B cell (primary cell): ENCODE measurements at regions of chr12 and their contacts with region 1.

Region 1: DNA sequence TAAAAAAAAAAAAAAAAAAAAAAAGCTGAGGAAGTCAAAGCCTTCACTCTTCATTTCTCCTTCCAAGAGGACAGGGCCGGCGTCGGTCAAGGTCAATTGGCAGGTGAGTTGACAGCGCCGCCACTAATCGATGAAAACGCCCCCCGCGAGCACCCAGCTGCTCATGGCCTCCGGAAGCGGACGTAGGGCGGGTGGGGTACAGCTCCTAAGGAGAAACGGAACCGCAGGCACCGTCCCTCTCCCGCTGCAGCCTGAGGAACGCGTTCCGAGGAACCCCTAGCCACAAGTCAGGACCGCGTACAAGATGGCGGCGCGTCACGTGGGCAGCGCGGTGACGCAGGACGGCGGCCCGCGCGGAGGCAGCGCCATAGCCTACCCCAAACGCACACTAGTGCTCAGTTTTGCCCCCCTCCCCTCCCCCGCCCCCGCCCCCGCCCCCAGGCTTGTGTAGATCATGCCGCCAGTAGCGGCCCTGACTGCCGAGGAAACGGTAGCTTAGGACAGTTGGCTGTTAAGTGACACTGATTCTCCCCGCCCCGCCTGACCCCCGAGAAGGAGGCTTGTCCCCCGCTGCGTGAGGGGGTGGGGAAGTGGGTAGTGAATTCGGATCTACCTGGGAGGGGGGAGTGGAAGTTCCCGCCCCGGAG is at the start of gene ATF1:
- DNase-seq: peak; percentile 95
- ATAC-seq: peak; percentile 80
- H3K4me3 ChIP-seq: peak within 1 kb of the TSS; percentile 92 to 98 (median 96)
- H3K4me3 Mint-ChIP-seq: peak within 1 kb of the TSS; percentile 91
- H3K27ac ChIP-seq: peak within 1 kb of the TSS; percentile 95
- H3K27ac Mint-ChIP-seq: peak within 1 kb of the TSS; percentile 99
- H3K4me1 ChIP-seq: peaks cover 10 to 33% of the 10 kb centered on the region in 2 donors
- H3K4me1 Mint-ChIP-seq: peaks cover 33% of the 10 kb centered on the region
- H3K27me3 ChIP-seq: no peaks in the 10 kb centered on the region
- H3K27me3 Mint-ChIP-seq: no peaks in the 10 kb centered on the region
- CTCF ChIP-seq: no peak
- total RNA-seq, gene ATF1: 39.5 and 45.4 TPM in 2 replicates

Region 2: GRCh38 chr12:50517456-50518048 is 246.2 kb before region 1 on chr12:
- CTCF ChIA-PET with region 1: interaction called, 3 read pairs
- POLR2A ChIA-PET with region 1: no interaction called
- intact Hi-C with region 1: loop called (anchors 2 kb)
- DNase-seq: peak; percentile 86
- ATAC-seq: peak; percentile 70
- H3K4me3 ChIP-seq: peak overlapping the region in 4 of 5 experiments; percentile 27 to 55 (median 38)
- H3K4me3 Mint-ChIP-seq: no peak overlapping the region
- H3K27ac ChIP-seq: peak overlapping the region; percentile 82 to 85
- H3K27ac Mint-ChIP-seq: no peak overlapping the region
- H3K4me1 ChIP-seq: peaks cover 86 to 97% of the 10 kb centered on the region in 2 donors
- H3K4me1 Mint-ChIP-seq: peaks cover 57% of the 10 kb centered on the region
- H3K27me3 ChIP-seq: no peaks in the 10 kb centered on the region
- H3K27me3 Mint-ChIP-seq: no peaks in the 10 kb centered on the region
- CTCF ChIP-seq: no peak

Region 3: GRCh38 chr12:50799908-50800307 is 36.1 kb after region 1 on chr12:
- CTCF ChIA-PET with region 1: no interaction called
- POLR2A ChIA-PET with region 1: no interaction called
- intact Hi-C with region 1: no loop called
- DNase-seq: no peak
- ATAC-seq: no peak
- H3K4me3 ChIP-seq: no peak overlapping the region
- H3K4me3 Mint-ChIP-seq: no peak overlapping the region
- H3K27ac ChIP-seq: no peak overlapping the region
- H3K27ac Mint-ChIP-seq: no peak overlapping the region
- H3K4me1 ChIP-seq: no peaks in the 10 kb centered on the region
- H3K4me1 Mint-ChIP-seq: no peaks in the 10 kb centered on the region
- H3K27me3 ChIP-seq: no peaks in the 10 kb centered on the region
- H3K27me3 Mint-ChIP-seq: no peaks in the 10 kb centered on the region
- CTCF ChIP-seq: no peak

Region 4: GRCh38 chr12:50924439-50925341 is 160.9 kb after region 1 on chr12:
- CTCF ChIA-PET with region 1: interaction called, 6 read pairs
- POLR2A ChIA-PET with region 1: no interaction called
- intact Hi-C with region 1: loop called (anchors 1 kb)
- DNase-seq: peak; percentile 83
- ATAC-seq: peak; percentile 94
- H3K4me3 ChIP-seq: peak overlapping the region; percentile 75 to 99 (median 88)
- H3K4me3 Mint-ChIP-seq: peak overlapping the region; percentile 96
- H3K27ac ChIP-seq: peak overlapping the region; percentile 81 to 91
- H3K27ac Mint-ChIP-seq: peak overlapping the region; percentile 98
- H3K4me1 ChIP-seq: peaks cover 43 to 44% of the 10 kb centered on the region in 2 donors
- H3K4me1 Mint-ChIP-seq: peaks cover 63% of the 10 kb centered on the region
- H3K27me3 ChIP-seq: no peaks in the 10 kb centered on the region
- H3K27me3 Mint-ChIP-seq: no peaks in the 10 kb centered on the region
- CTCF ChIP-seq: no peak

Region 5: DNA sequence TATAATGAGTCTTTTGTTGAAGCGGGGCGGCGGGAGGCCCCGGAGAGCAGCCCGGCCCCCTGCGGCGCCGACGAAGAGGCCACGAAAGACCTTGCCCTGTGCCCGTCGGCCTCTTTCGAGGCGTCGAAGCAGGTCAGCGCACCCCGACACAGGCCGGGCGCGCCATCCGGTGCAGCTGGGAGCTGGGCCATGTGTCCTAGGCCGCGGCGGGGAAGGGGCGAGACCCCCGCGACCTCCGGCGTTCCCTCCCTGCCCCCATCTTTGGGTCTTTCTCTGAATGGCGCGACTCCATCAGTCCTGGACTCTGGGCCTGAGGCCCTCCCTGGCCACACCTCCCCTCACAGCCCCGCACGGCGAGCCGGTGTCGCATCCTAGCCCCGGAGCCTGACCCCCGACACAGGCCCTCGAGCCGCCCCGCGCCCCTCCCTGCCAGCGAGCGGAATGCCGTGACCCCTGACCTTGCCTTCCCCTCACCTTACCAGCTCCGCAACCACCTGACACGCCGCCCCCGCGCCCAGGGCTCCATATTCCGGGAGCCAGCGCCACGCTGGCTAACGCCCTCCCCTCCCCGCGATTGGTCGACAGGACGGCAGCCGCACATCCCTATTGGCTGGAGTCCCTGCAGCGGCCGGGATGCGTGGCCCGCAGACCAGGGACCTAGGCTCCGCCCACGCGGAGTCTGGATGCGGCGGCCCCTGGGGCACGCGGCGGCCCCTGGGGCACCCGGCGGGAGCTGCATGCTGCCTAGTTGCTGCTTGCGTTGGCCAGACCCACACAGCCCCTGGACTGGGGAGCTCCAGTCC is 262.3 kb after region 1 on chr12 and contains the start of gene SLC11A2:
- CTCF ChIA-PET with region 1: interaction called, 11 read pairs
- POLR2A ChIA-PET with region 1: no interaction called
- intact Hi-C with region 1: loop called (anchors 1 kb)
- DNase-seq: peak; percentile 92
- ATAC-seq: peak; percentile 98
- H3K4me3 ChIP-seq: peak within 1 kb of the TSS; percentile 34 to 97 (median 78)
- H3K4me3 Mint-ChIP-seq: peak within 1 kb of the TSS; percentile 94
- H3K27ac ChIP-seq: peak within 1 kb of the TSS; percentile 71 to 74
- H3K27ac Mint-ChIP-seq: peak within 1 kb of the TSS; percentile 93
- H3K4me1 ChIP-seq: peaks cover 13 to 28% of the 10 kb centered on the region in 2 donors
- H3K4me1 Mint-ChIP-seq: peaks cover 36% of the 10 kb centered on the region
- H3K27me3 ChIP-seq: peaks cover 0 to 3% (median 0%) of the 10 kb centered on the region in 4 experiments
- H3K27me3 Mint-ChIP-seq: peaks cover 4% of the 10 kb centered on the region
- CTCF ChIP-seq: no peak
- total RNA-seq, gene SLC11A2: 42.0 and 45.7 TPM in 2 replicates

Region 6: DNA sequence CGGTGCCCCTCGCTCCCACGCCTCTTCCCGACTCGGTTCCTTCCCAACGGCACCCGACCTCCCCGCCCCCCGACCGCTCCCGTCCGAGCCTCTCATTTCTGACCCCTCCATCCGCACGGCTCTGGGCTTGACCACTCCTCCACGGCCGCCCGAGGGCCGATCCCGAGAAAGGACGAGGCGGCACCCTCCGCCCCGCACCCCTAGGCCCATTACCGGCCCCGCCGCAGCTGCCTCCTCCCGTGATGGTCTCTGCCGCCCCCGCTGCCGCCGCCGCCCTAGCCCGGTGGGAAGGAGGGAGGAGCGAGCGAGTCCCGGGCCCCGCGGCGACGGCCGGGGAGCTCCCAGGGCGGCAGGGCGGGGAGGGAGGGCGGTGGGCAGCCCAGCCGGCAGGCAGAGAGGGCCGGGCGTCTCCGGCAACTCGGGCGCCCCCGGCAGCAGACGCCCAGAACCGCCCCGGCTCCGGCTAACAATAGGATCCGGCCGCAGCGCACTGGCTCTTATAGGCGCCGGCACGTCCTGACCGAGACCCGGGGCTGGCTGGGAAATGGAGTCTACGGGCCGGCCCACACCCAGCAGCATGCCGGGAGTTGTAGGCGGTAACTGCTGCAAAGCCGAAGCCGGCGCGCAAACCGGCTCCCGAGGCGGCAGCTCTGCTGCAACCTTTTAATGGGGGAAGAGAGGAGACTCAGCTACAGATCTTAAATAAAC is 319.5 kb after region 1 on chr12 and contains the start of gene CSRNP2:
- CTCF ChIA-PET with region 1: interaction called, 6 read pairs
- POLR2A ChIA-PET with region 1: no interaction called
- intact Hi-C with region 1: loop called (anchors 1 kb)
- DNase-seq: peak; percentile 96
- ATAC-seq: peak; percentile 99
- H3K4me3 ChIP-seq: peak within 1 kb of the TSS; percentile 54 to 87 (median 77)
- H3K4me3 Mint-ChIP-seq: peak within 1 kb of the TSS; percentile 96
- H3K27ac ChIP-seq: peak within 1 kb of the TSS; percentile 11 to 88
- H3K27ac Mint-ChIP-seq: peak within 1 kb of the TSS; percentile 88
- H3K4me1 ChIP-seq: peaks cover 9 to 17% of the 10 kb centered on the region in 2 donors
- H3K4me1 Mint-ChIP-seq: peaks cover 25% of the 10 kb centered on the region
- H3K27me3 ChIP-seq: no peaks in the 10 kb centered on the region
- H3K27me3 Mint-ChIP-seq: no peaks in the 10 kb centered on the region
- CTCF ChIP-seq: peak; percentile 20
- total RNA-seq, gene CSRNP2: 49.8 and 52.3 TPM in 2 replicates

Region 7: DNA sequence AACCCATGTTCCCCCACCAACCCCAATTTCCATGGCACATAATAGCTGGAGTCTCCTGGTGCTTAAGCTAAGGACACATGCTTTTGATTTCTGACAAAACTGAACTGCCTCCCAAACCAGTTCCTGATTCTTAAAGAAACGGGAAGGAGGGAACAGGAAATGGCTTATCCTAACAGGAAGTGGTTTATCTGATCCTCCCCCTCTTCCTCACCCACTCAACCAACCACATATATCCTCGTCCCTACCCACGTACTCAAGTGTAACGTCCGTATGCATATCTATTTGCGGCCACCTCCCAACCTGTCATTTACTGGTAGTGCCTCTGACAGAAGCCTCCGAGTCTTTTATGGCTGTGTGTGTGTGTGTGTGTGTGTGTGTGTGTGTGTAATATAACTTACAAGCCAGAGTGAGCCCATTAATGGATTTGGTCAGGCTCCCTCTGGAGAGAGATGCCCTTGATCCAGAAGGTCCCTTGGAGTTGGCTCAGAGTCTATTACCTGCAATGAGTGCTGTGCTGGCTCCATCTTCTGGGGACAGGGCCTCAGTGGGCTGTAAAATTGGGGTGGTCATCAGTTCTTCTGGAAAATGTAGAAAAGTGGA is 482.6 kb after region 1 on chr12:
- CTCF ChIA-PET with region 1: interaction called, 3 read pairs
- POLR2A ChIA-PET with region 1: no interaction called
- intact Hi-C with region 1: loop called (anchors 10 kb)
- DNase-seq: peak; percentile 53
- ATAC-seq: peak; percentile 24
- H3K4me3 ChIP-seq: no peak overlapping the region
- H3K4me3 Mint-ChIP-seq: peak overlapping the region; percentile 49
- H3K27ac ChIP-seq: peak overlapping the region; percentile 63 to 78
- H3K27ac Mint-ChIP-seq: peak overlapping the region; percentile 91
- H3K4me1 ChIP-seq: peaks cover 26 to 35% of the 10 kb centered on the region in 2 donors
- H3K4me1 Mint-ChIP-seq: peaks cover 49% of the 10 kb centered on the region
- H3K27me3 ChIP-seq: no peaks in the 10 kb centered on the region
- H3K27me3 Mint-ChIP-seq: no peaks in the 10 kb centered on the region
- CTCF ChIP-seq: no peak